Right cardiac atrium (tissue), 5 donors: ENCODE measurements at regions of chr2 and their contacts with region 1.

Region 1: GRCh38 chr2:152036611-152037469 is 62.0 kb downstream of the CACNB4 start:
- DNase-seq: peak; percentile 59 to 78 (median 62)
- ATAC-seq: peak; percentile 72 to 78
- H3K4me3 ChIP-seq: no peak overlapping the region
- H3K27ac ChIP-seq: no peak overlapping the region
- H3K4me1 ChIP-seq: peaks cover 6% of the 10 kb centered on the region
- H3K27me3 ChIP-seq: no peaks in the 10 kb centered on the region

Region 2: GRCh38 chr2:152175458-152176325 is 138.9 kb after region 1 on chr2 and contains the start of gene STAM2:
- intact Hi-C with region 1: loop called in 3 of 4 experiments (anchors 10 kb)
- DNase-seq: peak; percentile 92 to 98 (median 97)
- ATAC-seq: peak; percentile 95
- H3K4me3 ChIP-seq: peak within 1 kb of the TSS; percentile 59
- H3K27ac ChIP-seq: peak within 1 kb of the TSS; percentile 85
- H3K4me1 ChIP-seq: no peaks in the 10 kb centered on the region
- H3K27me3 ChIP-seq: no peaks in the 10 kb centered on the region
- total RNA-seq, gene STAM2: 25.0 to 32.2 (median 28.9) TPM

Region 3: DNA sequence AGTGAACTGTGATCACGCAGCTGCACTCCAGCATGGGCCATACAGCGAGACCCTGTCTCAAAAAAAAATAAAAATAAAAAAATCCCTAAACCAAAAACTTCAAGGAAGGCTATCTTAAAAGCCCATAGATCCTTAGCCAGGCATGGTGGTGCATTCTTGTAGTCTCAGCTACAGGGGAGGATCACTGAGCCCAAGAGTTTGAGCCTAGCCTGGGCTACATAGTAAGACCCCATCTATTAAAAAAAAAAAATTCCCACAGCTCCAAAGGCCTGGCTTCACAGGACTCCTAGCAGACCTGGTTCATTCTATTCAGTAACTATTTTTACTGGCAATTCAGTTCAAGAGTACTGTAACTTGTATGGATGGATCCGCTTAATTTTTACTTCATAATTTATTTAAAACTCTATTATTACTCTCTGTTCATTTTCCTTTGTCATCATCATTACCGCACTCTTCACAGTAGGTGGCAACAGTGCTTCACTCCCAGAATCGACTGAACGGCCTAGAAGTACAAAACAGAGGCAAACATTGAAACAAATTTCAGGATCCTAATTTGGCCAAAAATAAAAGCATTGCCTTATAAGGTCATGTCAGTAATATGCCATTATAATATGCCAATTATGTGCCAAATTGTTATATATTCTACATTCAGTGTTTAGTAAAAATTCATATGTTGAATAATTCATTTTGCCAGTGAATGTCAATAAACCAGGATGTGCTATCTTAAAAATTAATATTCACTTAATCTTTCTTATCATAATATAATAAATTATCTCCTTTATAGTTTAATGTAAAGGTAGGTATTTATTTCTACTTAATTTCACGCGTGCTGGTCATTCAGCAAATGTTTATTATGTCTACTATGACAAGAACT is 153.0 kb after region 1 on chr2:
- intact Hi-C with region 1: loop called in 1 of 4 experiments (anchors 10 kb)
- DNase-seq: peak in 2 of 3 donors; percentile 27 to 55
- ATAC-seq: peak; percentile 81 to 84
- H3K4me3 ChIP-seq: no peak overlapping the region
- H3K27ac ChIP-seq: no peak overlapping the region
- H3K4me1 ChIP-seq: no peaks in the 10 kb centered on the region
- H3K27me3 ChIP-seq: no peaks in the 10 kb centered on the region

Region 4: GRCh38 chr2:152635635-152636298 is 598.9 kb after region 1 on chr2:
- intact Hi-C with region 1: loop called in 3 of 4 experiments (anchors 5 to 10 kb)
- DNase-seq: peak; percentile 47 to 58 (median 53)
- ATAC-seq: peak; percentile 44 to 66
- H3K4me3 ChIP-seq: no peak overlapping the region
- H3K27ac ChIP-seq: no peak overlapping the region
- H3K4me1 ChIP-seq: no peaks in the 10 kb centered on the region
- H3K27me3 ChIP-seq: no peaks in the 10 kb centered on the region